ENCODE measurements at regions of chr17 and their contacts with region 1.

Region 1: DNA sequence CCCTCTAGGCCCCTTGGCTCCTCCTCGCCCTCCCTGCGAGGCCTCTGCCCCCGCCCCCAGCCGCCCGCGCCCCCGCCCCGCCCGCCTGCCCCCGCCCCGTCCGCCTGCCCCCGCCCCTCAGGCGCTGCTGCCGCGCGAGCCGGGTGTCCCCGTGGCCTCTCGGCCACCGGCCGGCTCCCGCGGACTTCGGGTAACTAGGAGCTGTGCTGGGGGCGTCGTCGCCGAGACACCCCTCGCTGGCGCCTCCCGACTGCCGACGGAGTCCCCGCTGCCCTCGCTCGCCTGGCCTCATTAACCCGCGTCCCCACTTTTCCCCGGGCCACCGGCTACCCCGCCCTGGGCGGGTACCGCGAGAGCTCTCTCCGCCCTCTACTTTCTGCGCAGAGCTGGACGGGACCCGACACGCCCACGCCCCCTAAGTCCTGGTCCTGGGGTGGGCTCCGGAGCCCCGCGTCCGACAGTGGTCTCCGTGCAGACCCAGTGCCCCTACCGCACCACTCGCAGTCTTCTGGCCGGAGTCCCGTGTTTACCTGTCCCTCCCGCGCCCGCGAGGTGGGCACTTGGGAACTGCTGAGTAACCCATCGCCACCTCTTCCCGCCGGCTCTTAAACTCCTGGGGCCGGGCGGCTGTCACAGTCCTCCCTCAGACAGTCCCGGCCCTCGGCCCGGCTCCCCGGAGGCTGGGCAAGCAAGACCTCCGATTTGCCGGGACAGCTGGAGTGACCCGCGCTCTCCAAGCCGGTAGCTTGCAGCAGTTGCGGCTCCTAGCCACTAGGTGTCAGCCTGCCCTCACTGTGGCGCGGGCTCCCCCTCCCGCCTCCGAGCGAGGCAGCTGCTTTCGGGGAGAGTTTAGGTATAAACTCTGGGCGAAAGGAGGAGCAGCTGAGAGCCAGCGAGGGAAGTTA is at the start of gene TLCD1:
- DNase-seq: peak; percentile 97
- total RNA-seq, gene TLCD1: 2.4 TPM

Region 2: GRCh38 chr17:28743225-28744103 is 17.0 kb after region 1 on chr17 and contains the start of gene TRAF4:
- intact Hi-C with region 1: loop called (anchors 1 kb)
- DNase-seq: peak; percentile 87
- total RNA-seq, gene TRAF4: 2.8 TPM

Region 3: DNA sequence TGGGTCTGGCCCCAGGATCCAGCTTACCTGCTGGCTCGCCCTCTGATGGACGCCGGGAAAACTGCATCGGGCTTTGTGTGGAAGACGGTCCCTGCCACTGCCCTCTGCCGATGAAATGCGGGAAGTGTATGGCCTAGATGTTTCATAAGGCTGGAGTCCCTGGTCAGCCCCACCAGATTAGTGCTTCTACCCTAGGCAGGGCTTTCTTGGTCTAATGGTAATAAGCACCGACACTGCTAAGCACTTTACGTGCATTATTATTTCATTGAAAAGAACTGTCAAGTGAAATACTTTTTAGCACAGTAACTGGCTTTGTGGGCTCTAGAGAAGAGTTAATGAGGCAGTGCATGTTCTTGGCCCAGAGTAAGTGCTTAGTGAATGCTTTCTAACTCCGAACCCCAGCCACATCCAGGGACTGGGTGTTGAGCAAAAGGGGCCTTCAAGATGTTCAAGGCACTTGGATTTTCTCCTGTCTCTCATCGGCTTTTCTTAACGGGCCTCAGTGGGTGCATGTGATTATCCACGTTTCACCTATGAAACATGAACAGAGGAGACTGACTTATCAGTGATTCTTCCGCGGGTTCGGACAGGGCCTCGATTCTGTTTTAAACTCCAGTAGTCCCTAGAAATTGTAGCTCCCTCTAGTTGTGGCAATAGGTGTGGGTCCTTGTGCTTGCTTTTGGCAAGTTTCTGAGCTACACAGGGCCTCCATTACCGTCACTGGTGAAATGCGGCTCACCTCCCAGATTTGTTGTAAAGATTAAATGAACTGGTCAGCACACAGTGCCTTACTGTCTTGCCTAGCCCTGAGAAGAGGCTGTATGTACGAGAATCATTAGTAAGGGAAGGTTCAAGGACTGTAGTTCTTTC is 23.9 kb after region 1 on chr17:
- intact Hi-C with region 1: loop called (anchors 1 kb)
- DNase-seq: peak; percentile 95

Region 4: DNA sequence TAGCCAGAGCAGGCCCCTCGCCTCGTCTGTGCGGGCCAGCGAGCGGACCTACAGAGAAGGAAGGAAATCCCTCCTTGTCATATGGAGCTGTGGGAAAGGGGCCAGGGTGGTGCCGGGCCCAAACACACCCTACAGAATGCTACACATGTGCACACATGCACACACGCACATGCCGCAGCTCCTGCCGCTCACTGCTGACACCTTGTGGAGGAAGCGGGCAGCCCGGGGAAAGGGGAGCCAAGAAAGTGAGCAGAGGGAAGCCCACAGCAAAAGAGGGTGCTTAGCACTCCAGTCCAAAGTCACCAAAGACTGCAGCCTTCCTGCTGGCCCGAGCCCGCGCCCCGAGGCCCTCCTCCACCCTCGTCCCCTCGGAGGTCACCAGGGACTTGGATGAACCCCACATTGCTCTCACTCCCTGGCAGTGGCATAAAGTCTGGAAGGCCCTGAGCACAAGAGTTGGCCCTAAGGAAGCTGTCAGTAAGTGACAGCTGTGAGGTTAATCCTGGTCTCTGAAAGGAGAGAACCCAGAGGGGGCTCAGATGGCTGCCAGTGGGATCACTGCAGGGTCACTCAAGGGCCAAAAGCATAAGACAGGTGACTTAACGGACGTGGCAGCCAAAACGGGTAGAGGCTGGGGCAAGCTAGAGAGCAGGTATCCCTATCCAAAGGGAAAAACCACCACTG is 385.5 kb after region 1 on chr17:
- intact Hi-C with region 1: loop called (anchors 10 kb)
- DNase-seq: peak; percentile 86